ENCODE measurements at regions of chr1 and their contacts with region 1.

Region 1: GRCh38 chr1:70354332-70355110 is at the start of gene ANKRD13C:
- DNase-seq: peak; percentile 95 to 97
- ATAC-seq: peak; percentile 100
- H3K4me3 ChIP-seq: peak within 1 kb of the TSS; percentile 49 to 87
- H3K27ac ChIP-seq: peak within 1 kb of the TSS; percentile 78 to 91
- H3K4me1 ChIP-seq: peaks cover 0 to 2% of the 10 kb centered on the region in 2 donors
- H3K27me3 ChIP-seq: no peaks in the 10 kb centered on the region
- total RNA-seq, gene ANKRD13C: 25.6 to 28.3 TPM

Region 2: GRCh38 chr1:70221241-70222121 is 133.0 kb before region 1 on chr1 and contains the start of gene SRSF11:
- intact Hi-C with region 1: loop called in 1 of 2 experiments (anchors 5 kb)
- DNase-seq: peak; percentile 98 to 99
- ATAC-seq: peak; percentile 100
- H3K4me3 ChIP-seq: peak within 1 kb of the TSS; percentile 71 to 82
- H3K27ac ChIP-seq: peak within 1 kb of the TSS; percentile 90 to 94
- H3K4me1 ChIP-seq: peaks cover 4% of the 10 kb centered on the region in 2 donors
- H3K27me3 ChIP-seq: no peaks in the 10 kb centered on the region
- total RNA-seq, gene SRSF11: 196 to 232 TPM

Region 3: DNA sequence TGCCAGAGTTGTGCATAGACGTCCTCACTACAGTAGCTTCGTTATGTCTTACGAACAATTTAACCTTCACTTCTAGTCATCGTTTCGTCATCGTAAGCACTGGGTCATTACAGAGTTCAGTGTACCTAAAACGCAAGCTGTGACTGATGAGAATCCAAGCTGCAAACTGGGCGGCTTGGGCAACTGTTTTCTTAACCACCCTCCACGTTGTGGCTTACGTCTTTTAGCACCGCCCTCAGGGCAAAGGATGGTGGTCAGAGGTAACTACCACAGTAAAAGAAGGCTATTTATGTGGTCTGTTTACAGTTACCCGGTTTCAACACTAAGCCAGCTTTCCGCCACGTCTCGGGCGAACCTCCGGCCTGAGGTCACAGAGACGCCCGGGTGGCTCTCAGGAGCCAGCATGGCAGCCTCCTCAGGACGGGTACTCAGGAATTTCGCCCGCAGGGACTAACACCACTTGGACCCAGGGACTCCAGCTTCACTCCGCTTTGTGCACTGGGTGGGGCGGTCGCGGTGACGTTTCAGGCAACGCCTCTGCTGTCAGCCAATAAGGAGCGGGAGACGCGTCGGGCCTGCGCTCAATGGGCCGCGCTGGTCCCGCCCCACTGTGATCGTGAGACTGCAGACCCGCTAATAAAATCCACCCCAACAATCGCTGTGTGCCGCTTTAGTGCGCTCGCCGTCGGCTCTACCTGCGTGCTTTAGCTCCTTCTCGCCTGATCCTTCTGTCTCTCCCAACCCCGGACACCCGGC is 56.3 kb after region 1 on chr1 and contains the start of gene CTH:
- intact Hi-C with region 1: loop called (anchors 2 kb)
- DNase-seq: peak; percentile 98
- ATAC-seq: peak; percentile 100
- H3K4me3 ChIP-seq: peak within 1 kb of the TSS; percentile 78 to 94
- H3K27ac ChIP-seq: peak within 1 kb of the TSS; percentile 91 to 100
- H3K4me1 ChIP-seq: no peaks in the 10 kb centered on the region
- H3K27me3 ChIP-seq: no peaks in the 10 kb centered on the region
- total RNA-seq, gene CTH: 1.8 to 3.7 TPM

Measured in aorta (tissue), 5 donors.